CD8-positive, alpha-beta T cell (primary cell): ENCODE measurements at regions of chr4 and their contacts with region 1.

Region 1: GRCh38 chr4:17567271-17567670 is 9.7 kb upstream of the LAP3 start:
- DNase-seq: no peak
- ATAC-seq: no peak
- H3K4me3 ChIP-seq: no peak overlapping the region
- H3K4me3 Mint-ChIP-seq: no peak overlapping the region
- H3K27ac ChIP-seq: no peak overlapping the region
- H3K27ac Mint-ChIP-seq: no peak overlapping the region
- H3K4me1 ChIP-seq: no peaks in the 10 kb centered on the region
- H3K4me1 Mint-ChIP-seq: no peaks in the 10 kb centered on the region
- H3K27me3 ChIP-seq: no peaks in the 10 kb centered on the region
- H3K27me3 Mint-ChIP-seq: no peaks in the 10 kb centered on the region
- CTCF ChIP-seq: no peak

Region 2: DNA sequence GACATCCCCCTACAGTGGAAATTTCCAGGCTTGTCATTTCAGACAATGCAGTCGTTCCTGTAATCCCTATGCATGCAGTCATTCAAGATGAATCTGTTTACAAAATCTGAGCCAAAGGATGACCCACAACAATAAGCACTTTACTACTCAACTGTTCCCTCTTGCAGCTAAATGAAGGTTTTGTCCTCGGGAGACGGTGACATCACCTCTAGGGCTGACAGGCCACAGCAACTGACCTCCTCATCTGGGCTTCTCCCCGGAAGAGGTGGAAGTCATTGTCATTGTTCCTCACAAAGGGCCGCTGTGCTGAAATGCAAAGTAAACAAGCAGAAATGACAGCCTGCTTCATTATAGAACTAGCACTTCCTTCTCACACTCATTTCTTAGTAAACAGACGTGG is 23.1 kb before region 1 on chr4:
- CTCF ChIA-PET with region 1: interaction called, 14 read pairs
- POLR2A ChIA-PET with region 1: no interaction called
- intact Hi-C with region 1: no loop called
- DNase-seq: no peak
- ATAC-seq: no peak
- H3K4me3 ChIP-seq: no peak overlapping the region
- H3K4me3 Mint-ChIP-seq: no peak overlapping the region
- H3K27ac ChIP-seq: no peak overlapping the region
- H3K27ac Mint-ChIP-seq: no peak overlapping the region
- H3K4me1 ChIP-seq: no peaks in the 10 kb centered on the region
- H3K4me1 Mint-ChIP-seq: peaks cover 3% of the 10 kb centered on the region
- H3K27me3 ChIP-seq: no peaks in the 10 kb centered on the region
- H3K27me3 Mint-ChIP-seq: peaks cover 9% of the 10 kb centered on the region
- CTCF ChIP-seq: no peak